Gastrocnemius medialis (tissue), 4 donors: ENCODE measurements at regions of chr22 and their contacts with region 1.

Region 1: GRCh38 chr22:28329186-28330073 is 350.2 kb downstream of the TTC28 start:
- DNase-seq: no peak
- ATAC-seq: peak in 1 of 2 donors; percentile 45
- H3K4me3 ChIP-seq: no peak overlapping the region
- H3K27ac ChIP-seq: peak overlapping the region in 1 of 4 donors; percentile 15
- H3K4me1 ChIP-seq: peaks cover 22 to 30% of the 10 kb centered on the region in 2 donors
- H3K27me3 ChIP-seq: no peaks in the 10 kb centered on the region
- CTCF ChIP-seq: no peak
- POLR2A ChIP-seq: no peak

Region 2: GRCh38 chr22:28360939-28361338 is 31.5 kb after region 1 on chr22:
- in situ Hi-C with region 1: no loop called
- intact Hi-C with region 1: loop called (anchors 5 kb)
- DNase-seq: no peak
- ATAC-seq: no peak
- H3K4me3 ChIP-seq: no peak overlapping the region
- H3K27ac ChIP-seq: no peak overlapping the region
- H3K4me1 ChIP-seq: peaks cover 10 to 42% of the 10 kb centered on the region in 2 donors
- H3K27me3 ChIP-seq: no peaks in the 10 kb centered on the region
- CTCF ChIP-seq: no peak
- POLR2A ChIP-seq: no peak